ENCODE measurements at regions of chr6 and their contacts with region 1.

Region 1: GRCh38 chr6:111478749-111479148 is 4.3 kb downstream of the REV3L start:
- DNase-seq: peak; percentile 49
- ATAC-seq: peak; percentile 60
- H3K4me3 ChIP-seq: 0 out of 2 replicates have a peak overlapping the region, but pooled peaks have one; percentile 0
- H3K27ac ChIP-seq: peak overlapping the region; percentile 5
- H3K4me1 ChIP-seq: peaks cover 12% of the 10 kb centered on the region; the same call in 1 of the 2 replicates
- H3K27me3 ChIP-seq: no peaks in the 10 kb centered on the region
- CTCF ChIP-seq: peak; percentile 33 to 71 (median 63); a peak in 4 of 6 replicates
- EP300 ChIP-seq: no peak
- POLR2A ChIP-seq: no peak
- RAD21 ChIP-seq: peak; percentile 70

Region 2: GRCh38 chr6:111171577-111172400 is 307.0 kb before region 1 on chr6:
- CTCF ChIA-PET with region 1: no interaction called
- POLR2A ChIA-PET with region 1: no interaction called
- RAD21 ChIA-PET with region 1: no interaction called
- SMC1A ChIA-PET with region 1: no interaction called
- in situ Hi-C with region 1: no loop called
- intact Hi-C with region 1: no loop called
- DNase-seq: no peak
- ATAC-seq: peak; percentile 82
- H3K4me3 ChIP-seq: no peak overlapping the region
- H3K27ac ChIP-seq: no peak overlapping the region
- H3K4me1 ChIP-seq: peaks cover 23% of the 10 kb centered on the region
- H3K27me3 ChIP-seq: no peaks in the 10 kb centered on the region
- CTCF ChIP-seq: no peak
- EP300 ChIP-seq: no peak
- POLR2A ChIP-seq: no peak
- RAD21 ChIP-seq: no peak

Region 3: GRCh38 chr6:111265842-111266241 is 212.9 kb before region 1 on chr6:
- CTCF ChIA-PET with region 1: interaction called, 22 read pairs
- POLR2A ChIA-PET with region 1: interaction called, 8 read pairs
- RAD21 ChIA-PET with region 1: interaction called, 31 read pairs
- SMC1A ChIA-PET with region 1: interaction called, 27 read pairs
- in situ Hi-C with region 1: loop called (anchors 5 kb)
- intact Hi-C with region 1: no loop called
- DNase-seq: no peak
- ATAC-seq: no peak
- H3K4me3 ChIP-seq: no peak overlapping the region
- H3K27ac ChIP-seq: no peak overlapping the region
- H3K4me1 ChIP-seq: peaks cover 5% of the 10 kb centered on the region
- H3K27me3 ChIP-seq: no peaks in the 10 kb centered on the region
- CTCF ChIP-seq: no peak
- EP300 ChIP-seq: no peak
- POLR2A ChIP-seq: no peak
- RAD21 ChIP-seq: no peak

Region 4: GRCh38 chr6:111347589-111347988 is 131.2 kb before region 1 on chr6:
- CTCF ChIA-PET with region 1: interaction called, 15 read pairs
- POLR2A ChIA-PET with region 1: interaction called, 4 read pairs
- RAD21 ChIA-PET with region 1: interaction called, 23 read pairs
- SMC1A ChIA-PET with region 1: interaction called, 4 read pairs
- in situ Hi-C with region 1: no loop called
- intact Hi-C with region 1: no loop called
- DNase-seq: no peak
- ATAC-seq: no peak
- H3K4me3 ChIP-seq: no peak overlapping the region
- H3K27ac ChIP-seq: no peak overlapping the region
- H3K4me1 ChIP-seq: no peaks in the 10 kb centered on the region
- H3K27me3 ChIP-seq: no peaks in the 10 kb centered on the region
- CTCF ChIP-seq: no peak
- EP300 ChIP-seq: no peak
- POLR2A ChIP-seq: no peak
- RAD21 ChIP-seq: no peak

Region 5: DNA sequence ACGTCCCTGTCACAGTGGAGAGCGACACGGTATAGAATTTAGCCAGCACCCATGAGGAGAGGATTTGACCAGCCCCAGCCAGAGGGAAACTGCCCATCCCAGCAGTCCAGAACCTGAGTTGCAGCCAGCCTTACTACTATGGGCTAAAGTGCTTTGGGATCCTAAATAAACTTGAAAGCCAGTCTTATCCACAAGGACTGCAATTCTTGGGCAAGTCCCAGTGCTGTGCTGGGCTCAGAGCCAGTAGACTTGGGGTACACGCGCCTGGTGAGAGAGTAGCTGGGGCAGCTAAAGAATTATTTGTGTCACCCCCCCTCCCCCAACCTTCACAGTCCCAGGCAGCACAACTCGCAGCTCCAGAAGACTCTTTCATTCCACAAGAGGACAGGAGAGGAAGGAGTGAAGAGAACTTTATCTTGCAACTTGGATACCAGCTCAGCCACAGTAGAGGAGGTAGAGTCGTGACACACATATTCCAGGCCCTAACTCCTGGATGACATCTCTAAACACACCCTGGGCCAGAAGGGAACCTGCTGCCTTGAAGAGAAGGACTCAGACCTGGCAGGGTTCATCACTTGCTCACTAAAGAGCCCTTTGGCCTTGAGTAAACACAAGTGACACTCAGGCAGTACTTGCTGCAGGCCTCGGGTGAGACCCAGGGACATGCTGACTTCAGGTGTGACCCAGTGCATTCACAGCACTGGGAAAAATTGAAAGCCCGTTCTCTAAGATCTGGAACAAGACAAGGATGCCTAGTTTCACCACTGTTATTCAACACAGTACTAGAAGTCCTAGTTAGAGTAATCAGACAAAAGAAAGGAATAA is 96.1 kb before region 1 on chr6:
- CTCF ChIA-PET with region 1: interaction called, 6 read pairs
- POLR2A ChIA-PET with region 1: no interaction called
- RAD21 ChIA-PET with region 1: interaction called, 14 read pairs
- SMC1A ChIA-PET with region 1: interaction called, 19 read pairs
- in situ Hi-C with region 1: no loop called
- intact Hi-C with region 1: no loop called
- DNase-seq: no peak
- ATAC-seq: no peak
- H3K4me3 ChIP-seq: no peak overlapping the region
- H3K27ac ChIP-seq: no peak overlapping the region
- H3K4me1 ChIP-seq: 0 out of 2 replicates have a peak, but pooled peaks cover 3% of the 10 kb centered on the region
- H3K27me3 ChIP-seq: no peaks in the 10 kb centered on the region
- CTCF ChIP-seq: no peak
- EP300 ChIP-seq: no peak
- POLR2A ChIP-seq: no peak
- RAD21 ChIP-seq: no peak

Region 6: GRCh38 chr6:111411978-111412566 is 66.7 kb before region 1 on chr6:
- CTCF ChIA-PET with region 1: interaction called, 20 read pairs
- POLR2A ChIA-PET with region 1: interaction called, 10 read pairs
- RAD21 ChIA-PET with region 1: interaction called, 62 read pairs
- SMC1A ChIA-PET with region 1: interaction called, 49 read pairs
- in situ Hi-C with region 1: no loop called
- intact Hi-C with region 1: loop called (anchors 5 kb)
- DNase-seq: peak; percentile 48
- ATAC-seq: peak; percentile 74
- H3K4me3 ChIP-seq: no peak overlapping the region
- H3K27ac ChIP-seq: peak overlapping the region; percentile 64
- H3K4me1 ChIP-seq: peaks cover 31% of the 10 kb centered on the region
- H3K27me3 ChIP-seq: no peaks in the 10 kb centered on the region
- CTCF ChIP-seq: no peak
- EP300 ChIP-seq: peak in 1 of 2 experiments; percentile 81; a peak in 2 of 4 replicates
- POLR2A ChIP-seq: no peak
- RAD21 ChIP-seq: no peak

Region 7: DNA sequence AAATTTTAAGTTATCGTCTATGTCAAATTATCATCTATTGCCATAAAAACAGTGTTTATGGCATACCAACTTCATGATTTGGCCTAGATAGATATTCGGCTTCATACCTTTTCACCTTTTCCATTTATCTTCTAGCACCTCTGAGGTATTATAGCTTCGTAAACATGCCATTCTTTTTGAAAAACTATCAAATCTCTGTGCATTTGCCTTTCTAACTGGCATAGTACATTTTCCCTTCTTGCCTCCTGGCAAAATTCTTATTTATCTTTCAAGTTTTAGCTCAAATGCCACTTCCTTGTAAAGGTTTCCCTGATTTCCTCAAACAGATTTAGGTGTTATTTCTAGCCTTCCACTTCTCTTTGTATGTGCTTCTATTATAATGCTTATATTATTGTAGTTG is 11.3 kb after region 1 on chr6:
- CTCF ChIA-PET with region 1: interaction called, 7 read pairs
- POLR2A ChIA-PET with region 1: interaction called, 7 read pairs
- RAD21 ChIA-PET with region 1: interaction called, 8 read pairs
- SMC1A ChIA-PET with region 1: interaction called, 10 read pairs
- in situ Hi-C with region 1: no loop called
- intact Hi-C with region 1: no loop called
- DNase-seq: no peak
- ATAC-seq: no peak
- H3K4me3 ChIP-seq: no peak overlapping the region
- H3K27ac ChIP-seq: no peak overlapping the region
- H3K4me1 ChIP-seq: peaks cover 14% of the 10 kb centered on the region
- H3K27me3 ChIP-seq: no peaks in the 10 kb centered on the region
- CTCF ChIP-seq: no peak
- EP300 ChIP-seq: no peak
- POLR2A ChIP-seq: no peak
- RAD21 ChIP-seq: no peak

Region 8: DNA sequence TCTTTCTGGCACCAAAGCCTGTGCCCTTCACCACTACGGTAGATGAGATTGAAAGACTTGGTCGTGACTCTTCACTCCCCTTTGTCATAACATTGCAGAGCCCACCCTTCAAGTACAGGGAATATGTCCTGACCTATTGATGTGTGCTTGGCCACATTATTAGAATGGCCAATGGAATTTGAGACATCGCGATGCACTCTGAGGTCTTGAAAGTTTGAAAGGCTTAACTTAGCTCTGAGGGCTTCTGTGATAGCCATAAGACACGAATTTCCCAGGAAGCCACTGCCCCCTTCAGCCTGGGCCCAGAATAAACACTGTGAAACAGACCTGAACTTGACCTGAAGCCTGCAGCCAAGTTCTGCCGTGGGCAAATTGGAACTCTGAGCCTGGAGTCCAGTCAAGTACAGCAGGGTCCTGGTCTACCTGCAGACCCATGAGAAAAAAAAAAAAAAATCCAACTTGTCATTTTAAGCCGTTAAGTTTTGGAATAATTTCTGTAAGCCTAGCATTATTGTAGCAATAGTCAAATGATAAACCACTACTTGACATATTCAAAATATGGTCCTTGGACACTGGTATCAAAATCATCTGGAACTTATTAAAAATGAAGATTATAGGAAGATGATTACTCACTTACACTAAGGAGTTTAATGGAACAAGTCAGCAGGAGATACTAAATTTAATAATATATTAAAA is 163.9 kb after region 1 on chr6:
- CTCF ChIA-PET with region 1: interaction called, 6 read pairs
- POLR2A ChIA-PET with region 1: no interaction called
- RAD21 ChIA-PET with region 1: interaction called, 10 read pairs
- SMC1A ChIA-PET with region 1: interaction called, 3 read pairs
- in situ Hi-C with region 1: no loop called
- intact Hi-C with region 1: loop called (anchors 5 kb)
- DNase-seq: peak; percentile 21
- ATAC-seq: peak; percentile 95
- H3K4me3 ChIP-seq: no peak overlapping the region
- H3K27ac ChIP-seq: no peak overlapping the region
- H3K4me1 ChIP-seq: no peaks in the 10 kb centered on the region
- H3K27me3 ChIP-seq: no peaks in the 10 kb centered on the region
- CTCF ChIP-seq: peak; percentile 57 to 77 (median 65)
- EP300 ChIP-seq: no peak
- POLR2A ChIP-seq: no peak
- RAD21 ChIP-seq: peak; percentile 75

Region 9: GRCh38 chr6:111672761-111673495 is 194.2 kb after region 1 on chr6:
- CTCF ChIA-PET with region 1: no interaction called
- POLR2A ChIA-PET with region 1: no interaction called
- RAD21 ChIA-PET with region 1: no interaction called
- SMC1A ChIA-PET with region 1: no interaction called
- in situ Hi-C with region 1: no loop called
- intact Hi-C with region 1: no loop called
- DNase-seq: no peak
- ATAC-seq: no peak
- H3K4me3 ChIP-seq: no peak overlapping the region
- H3K27ac ChIP-seq: no peak overlapping the region
- H3K4me1 ChIP-seq: no peaks in the 10 kb centered on the region
- H3K27me3 ChIP-seq: no peaks in the 10 kb centered on the region
- CTCF ChIP-seq: no peak
- EP300 ChIP-seq: no peak
- POLR2A ChIP-seq: no peak
- RAD21 ChIP-seq: no peak

Measured in GM12878 (cell line).